Activated T-helper 2 cell treated with anti-CD3 and anti-CD28 coated beads, Interferon-gamma antibody, Interleukin-2, Interleukin-4, amounts not matched to agents 10 μg/mL and 5 μg/mL and 100 μg/mL, durations not matched to agents 14 hours and 24 hours and 36 hours (primary cell): ENCODE measurements at regions of chr6 and their contacts with region 1.

Region 1: GRCh38 chr6:31541658-31542521 is at the start of gene DDX39B:
- DNase-seq: peak; percentile 94
- H3K4me3 Mint-ChIP-seq: peak within 1 kb of the TSS; percentile 98
- H3K27ac Mint-ChIP-seq: peak within 1 kb of the TSS; percentile 95
- H3K4me1 Mint-ChIP-seq: peaks cover 42% of the 10 kb centered on the region
- H3K27me3 Mint-ChIP-seq: no peaks in the 10 kb centered on the region
- total RNA-seq, gene DDX39B: 579 and 583 TPM in 2 replicates

Region 2: GRCh38 chr6:31502586-31502985 is 39.3 kb before region 1 on chr6:
- intact Hi-C with region 1: no loop called
- DNase-seq: no peak
- H3K4me3 Mint-ChIP-seq: no peak overlapping the region
- H3K27ac Mint-ChIP-seq: no peak overlapping the region
- H3K4me1 Mint-ChIP-seq: peaks cover 38% of the 10 kb centered on the region
- H3K27me3 Mint-ChIP-seq: no peaks in the 10 kb centered on the region

Region 3: DNA sequence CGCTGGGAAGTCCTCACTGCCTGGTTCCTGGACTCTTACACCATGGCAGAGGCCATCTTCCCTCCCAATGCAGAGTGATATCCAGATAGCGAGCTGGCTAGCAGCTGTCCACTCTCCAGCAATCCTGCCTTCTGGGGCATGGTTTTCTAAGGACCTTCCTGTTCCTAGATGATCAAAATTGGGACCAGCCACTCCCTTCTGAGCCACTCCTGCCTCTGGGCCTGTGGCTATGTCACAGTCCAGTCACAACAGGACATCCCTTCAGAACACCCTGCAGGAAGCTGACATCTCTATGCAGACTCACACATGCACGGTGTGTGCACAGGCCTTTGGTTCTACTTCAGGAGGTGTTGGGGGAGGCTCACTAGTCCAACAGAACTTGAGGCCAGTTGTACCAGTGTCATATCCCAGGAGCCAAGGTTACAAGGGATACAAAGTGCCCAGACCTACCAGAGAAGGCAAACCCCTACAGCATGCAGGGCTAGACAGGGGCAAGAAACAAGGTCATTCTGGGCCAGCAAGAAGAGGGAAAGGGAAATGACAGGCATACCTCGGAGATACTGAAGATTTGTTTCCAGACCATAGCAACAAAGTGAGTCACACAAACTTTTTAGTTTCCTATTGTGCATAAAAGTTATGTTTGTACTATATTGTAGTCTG is 15.8 kb before region 1 on chr6:
- intact Hi-C with region 1: no loop called
- DNase-seq: no peak
- H3K4me3 Mint-ChIP-seq: no peak overlapping the region
- H3K27ac Mint-ChIP-seq: no peak overlapping the region
- H3K4me1 Mint-ChIP-seq: peaks cover 5% of the 10 kb centered on the region
- H3K27me3 Mint-ChIP-seq: peaks cover 13% of the 10 kb centered on the region

Region 4: DNA sequence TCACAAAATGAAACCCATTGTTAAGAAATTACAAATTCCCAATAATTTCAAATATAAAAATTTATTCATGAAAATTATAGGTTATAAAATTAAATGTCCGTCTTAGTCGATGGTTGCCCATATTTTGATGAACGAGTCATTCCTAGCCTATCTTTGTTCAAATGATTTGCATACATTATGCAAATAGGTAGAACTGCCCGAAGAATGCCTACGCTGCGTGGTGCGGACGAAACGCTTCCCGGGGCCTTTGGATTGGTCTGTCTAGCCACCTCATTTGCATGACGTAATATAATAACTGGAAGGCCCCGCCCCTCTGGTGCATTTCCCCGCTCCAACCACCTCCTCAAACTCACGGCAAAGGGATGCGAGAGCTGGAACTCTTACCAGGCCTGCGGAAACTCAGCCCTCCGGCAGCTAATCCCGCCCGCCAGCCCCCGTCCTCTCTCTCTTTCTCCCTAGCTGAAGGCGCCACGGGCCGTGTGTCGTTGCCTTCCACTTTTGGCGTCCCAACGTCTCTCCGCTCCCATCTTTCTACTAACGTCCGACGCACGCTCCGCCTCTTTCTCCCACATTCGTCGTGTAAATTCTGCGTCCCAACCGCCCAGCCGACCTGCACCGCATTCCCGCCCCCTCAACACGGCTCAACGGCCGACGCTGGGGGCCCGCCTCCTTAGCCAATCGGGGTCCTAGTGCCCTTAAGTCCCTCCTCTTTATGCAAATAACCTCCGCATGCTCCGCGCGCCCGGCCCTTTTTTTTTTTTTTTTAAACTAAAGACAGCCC is 78.1 kb after region 1 on chr6:
- intact Hi-C with region 1: loop called (anchors 1 kb)
- DNase-seq: peak; percentile 98
- H3K4me3 Mint-ChIP-seq: peak overlapping the region; percentile 81
- H3K27ac Mint-ChIP-seq: peak overlapping the region; percentile 94
- H3K4me1 Mint-ChIP-seq: peaks cover 39% of the 10 kb centered on the region
- H3K27me3 Mint-ChIP-seq: no peaks in the 10 kb centered on the region

Region 5: DNA sequence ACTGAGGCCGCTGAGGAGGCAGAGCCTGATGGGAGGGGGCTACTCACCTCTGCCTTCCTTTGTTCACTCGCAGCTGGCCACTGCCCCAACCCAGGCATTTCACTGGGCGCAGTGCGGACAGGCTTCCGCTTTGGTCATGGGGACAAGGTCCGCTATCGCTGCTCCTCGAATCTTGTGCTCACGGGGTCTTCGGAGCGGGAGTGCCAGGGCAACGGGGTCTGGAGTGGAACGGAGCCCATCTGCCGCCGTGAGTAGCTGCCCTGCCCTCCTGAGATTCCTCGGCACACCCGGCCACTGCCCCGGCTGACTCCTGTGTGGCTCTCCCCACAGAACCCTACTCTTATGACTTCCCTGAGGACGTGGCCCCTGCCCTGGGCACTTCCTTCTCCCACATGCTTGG is 391.6 kb after region 1 on chr6:
- intact Hi-C with region 1: no loop called
- DNase-seq: no peak
- H3K4me3 Mint-ChIP-seq: no peak overlapping the region
- H3K27ac Mint-ChIP-seq: no peak overlapping the region
- H3K4me1 Mint-ChIP-seq: no peaks in the 10 kb centered on the region
- H3K27me3 Mint-ChIP-seq: no peaks in the 10 kb centered on the region

Region 6: DNA sequence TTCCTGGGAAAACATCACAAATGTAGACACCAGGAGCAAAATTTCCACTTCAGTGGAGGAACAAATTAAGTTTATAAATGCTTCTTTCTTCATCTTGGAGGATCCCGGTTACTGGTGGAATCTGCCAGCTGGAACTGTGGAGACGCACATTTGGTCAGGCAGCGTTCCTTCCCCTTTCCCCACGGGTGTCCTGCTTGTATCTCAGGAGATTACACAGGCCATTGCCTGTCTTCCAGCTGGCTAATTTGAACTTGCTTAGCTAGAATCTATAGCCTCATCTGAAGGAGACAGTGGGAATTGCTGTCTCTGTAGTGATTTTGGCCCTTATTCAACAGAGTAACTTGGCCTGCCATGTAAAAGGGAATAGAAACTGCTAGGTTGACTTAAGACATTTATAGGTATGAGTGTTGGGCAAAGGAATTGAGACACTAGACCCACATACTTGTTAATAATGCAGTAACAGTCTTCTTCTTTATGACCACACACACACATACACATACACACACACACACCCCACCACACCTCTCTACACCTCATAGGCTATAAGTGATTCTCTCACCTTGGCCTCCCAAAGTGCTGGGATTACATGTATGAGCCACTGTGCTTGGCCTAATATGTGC is 795.4 kb after region 1 on chr6:
- intact Hi-C with region 1: no loop called
- DNase-seq: no peak
- H3K4me3 Mint-ChIP-seq: no peak overlapping the region
- H3K27ac Mint-ChIP-seq: no peak overlapping the region
- H3K4me1 Mint-ChIP-seq: no peaks in the 10 kb centered on the region
- H3K27me3 Mint-ChIP-seq: peaks cover 47% of the 10 kb centered on the region